ENCODE measurements at regions of chr17 and their contacts with region 1.

Region 1: DNA sequence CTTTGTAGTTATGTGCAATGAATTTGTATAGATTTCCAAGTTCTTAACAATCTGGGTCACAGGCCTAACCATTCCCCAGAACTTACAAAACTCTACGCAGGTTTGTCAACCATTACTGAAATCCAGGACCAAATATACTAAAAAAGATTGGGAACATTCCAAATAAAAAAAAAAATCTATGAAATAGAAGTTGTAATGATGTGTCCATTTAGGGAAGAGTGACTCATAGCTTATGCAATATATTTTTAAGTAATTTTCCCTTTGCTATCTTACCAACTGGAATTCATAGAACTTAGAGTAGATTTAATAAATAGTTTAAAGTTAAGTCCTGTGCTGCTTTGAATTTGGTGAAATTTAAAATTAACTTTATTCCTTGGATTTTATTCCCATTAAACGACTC is 393.2 kb downstream of the PMP22 start:
- DNase-seq: no peak
- H3K4me3 ChIP-seq: no peak overlapping the region
- H3K27ac ChIP-seq: no peak overlapping the region
- H3K4me1 ChIP-seq: no peaks in the 10 kb centered on the region
- H3K27me3 ChIP-seq: no peaks in the 10 kb centered on the region; the same call in 1 of the 2 replicates
- CTCF ChIP-seq: no peak

Region 2: DNA sequence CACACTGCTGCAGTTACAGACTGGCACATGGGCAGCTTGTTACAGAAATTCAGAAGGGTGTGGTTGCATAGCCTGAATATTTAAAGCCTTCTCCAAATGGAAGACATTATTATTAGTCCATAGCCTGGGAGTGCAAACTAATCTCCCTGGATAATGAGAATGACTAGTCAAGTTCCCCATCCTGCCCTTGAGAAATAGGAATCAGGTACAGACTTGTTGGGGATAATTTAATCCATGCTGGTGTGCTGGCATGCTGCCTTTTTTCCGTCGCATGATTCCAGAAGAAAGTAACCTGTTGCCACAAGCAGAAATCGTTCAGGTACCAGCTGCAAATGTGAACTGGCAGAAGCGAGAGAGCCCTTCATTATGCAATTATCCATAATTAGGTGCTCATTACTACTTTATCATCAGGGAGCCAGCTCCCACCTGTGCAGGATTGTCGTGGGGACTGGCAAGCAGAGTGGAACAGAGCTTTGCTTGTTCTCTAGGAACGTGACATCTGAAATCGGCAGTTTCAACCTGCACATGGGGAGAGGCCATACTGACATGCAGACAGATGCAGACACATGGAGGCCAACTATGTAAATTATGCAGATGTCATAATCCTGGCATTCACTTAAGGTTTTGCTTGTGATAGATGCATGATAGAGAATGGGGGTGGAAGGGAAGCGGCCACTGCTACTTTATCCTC is 26.2 kb before region 1 on chr17:
- CTCF ChIA-PET with region 1: no interaction called
- POLR2A ChIA-PET with region 1: no interaction called
- intact Hi-C with region 1: no loop called
- DNase-seq: no peak
- H3K4me3 ChIP-seq: no peak overlapping the region
- H3K27ac ChIP-seq: no peak overlapping the region
- H3K4me1 ChIP-seq: no peaks in the 10 kb centered on the region
- H3K27me3 ChIP-seq: no peaks in the 10 kb centered on the region
- CTCF ChIP-seq: no peak

Region 3: GRCh38 chr17:15298176-15298575 is 426.3 kb after region 1 on chr17:
- CTCF ChIA-PET with region 1: no interaction called
- POLR2A ChIA-PET with region 1: no interaction called
- intact Hi-C with region 1: no loop called
- DNase-seq: no peak
- H3K4me3 ChIP-seq: no peak overlapping the region
- H3K27ac ChIP-seq: no peak overlapping the region
- H3K4me1 ChIP-seq: no peaks in the 10 kb centered on the region
- H3K27me3 ChIP-seq: peaks cover 31% of the 10 kb centered on the region
- CTCF ChIP-seq: no peak

Region 4: DNA sequence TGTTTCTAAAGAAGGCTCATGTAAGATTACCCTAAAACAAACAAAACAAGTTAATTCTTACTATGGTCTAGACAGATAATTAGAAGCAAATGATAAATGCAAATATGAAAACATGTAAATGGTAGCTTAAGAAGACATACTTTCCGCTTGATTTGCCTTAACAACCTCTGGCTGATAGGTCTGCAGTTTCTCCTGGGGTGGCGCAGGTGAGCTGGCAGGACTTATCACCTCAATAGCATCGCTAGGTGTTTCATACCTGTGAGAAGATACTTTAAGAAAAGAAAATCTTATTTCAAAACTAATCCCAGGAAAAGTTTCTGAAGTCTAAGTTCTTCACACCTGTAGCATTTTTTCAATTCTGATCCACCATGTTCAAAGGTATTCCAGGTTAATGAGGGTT is 1186.4 kb after region 1 on chr17:
- CTCF ChIA-PET with region 1: interaction called, 13 read pairs
- POLR2A ChIA-PET with region 1: no interaction called
- intact Hi-C with region 1: no loop called
- DNase-seq: no peak
- H3K4me3 ChIP-seq: no peak overlapping the region
- H3K27ac ChIP-seq: no peak overlapping the region
- H3K4me1 ChIP-seq: no peaks in the 10 kb centered on the region
- H3K27me3 ChIP-seq: no peaks in the 10 kb centered on the region
- CTCF ChIP-seq: no peak

Measured in PC-9 (cell line).